ENCODE measurements at regions of chr5 and their contacts with region 1.

Region 1: GRCh38 chr5:107979900-107980299 is 309.2 kb upstream of the EFNA5 start:
- DNase-seq: no peak
- ATAC-seq: peak; percentile 41
- H3K4me3 ChIP-seq: no peak overlapping the region
- H3K4me3 Mint-ChIP-seq: peak overlapping the region in 2 of 10 donors; percentile 1 to 45
- H3K27ac ChIP-seq: no peak overlapping the region
- H3K27ac Mint-ChIP-seq: no peak overlapping the region
- H3K4me1 ChIP-seq: no peaks in the 10 kb centered on the region
- H3K4me1 Mint-ChIP-seq: peaks cover 0 to 33% (median 0%) of the 10 kb centered on the region in 7 donors
- H3K27me3 ChIP-seq: no peaks in the 10 kb centered on the region
- H3K27me3 Mint-ChIP-seq: no peaks in the 10 kb centered on the region

Region 2: DNA sequence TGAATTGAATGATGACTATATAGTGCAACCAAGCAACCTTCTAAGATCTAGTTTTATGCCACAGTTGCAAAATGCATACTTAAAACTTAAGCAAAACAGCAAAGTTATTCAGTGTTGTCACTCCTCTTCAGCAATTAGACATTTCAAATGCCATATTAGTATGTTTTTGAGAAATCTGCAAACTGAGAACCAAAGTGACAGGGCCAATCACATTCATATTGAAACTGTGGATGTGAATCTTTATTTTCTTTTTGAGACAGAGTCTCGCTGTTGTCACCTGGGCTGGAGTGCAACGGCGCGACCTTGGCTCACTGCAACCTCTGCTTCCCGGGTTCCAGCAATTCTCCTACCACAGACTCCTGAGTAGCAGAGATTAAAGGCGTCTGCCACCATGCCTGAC is 59.9 kb before region 1 on chr5:
- CTCF ChIA-PET with region 1: no interaction called
- POLR2A ChIA-PET with region 1: no interaction called
- intact Hi-C with region 1: loop called in 1 of 2 experiments (anchors 2 kb)
- DNase-seq: no peak
- ATAC-seq: no peak
- H3K4me3 ChIP-seq: no peak overlapping the region
- H3K4me3 Mint-ChIP-seq: peak overlapping the region in 1 of 10 donors; percentile 13
- H3K27ac ChIP-seq: no peak overlapping the region
- H3K27ac Mint-ChIP-seq: peak overlapping the region in 1 of 9 donors; percentile 4
- H3K4me1 ChIP-seq: peaks cover 0 to 5% of the 10 kb centered on the region in 2 donors
- H3K4me1 Mint-ChIP-seq: peaks cover 4 to 54% (median 27%) of the 10 kb centered on the region in 7 donors
- H3K27me3 ChIP-seq: no peaks in the 10 kb centered on the region
- H3K27me3 Mint-ChIP-seq: no peaks in the 10 kb centered on the region

Region 3: GRCh38 chr5:108078345-108078744 is 98.4 kb after region 1 on chr5:
- CTCF ChIA-PET with region 1: no interaction called
- POLR2A ChIA-PET with region 1: no interaction called
- intact Hi-C with region 1: no loop called
- DNase-seq: no peak
- ATAC-seq: no peak
- H3K4me3 ChIP-seq: no peak overlapping the region
- H3K4me3 Mint-ChIP-seq: no peak overlapping the region
- H3K27ac ChIP-seq: no peak overlapping the region
- H3K27ac Mint-ChIP-seq: no peak overlapping the region
- H3K4me1 ChIP-seq: no peaks in the 10 kb centered on the region
- H3K4me1 Mint-ChIP-seq: peaks cover 0 to 4% (median 0%) of the 10 kb centered on the region in 7 donors
- H3K27me3 ChIP-seq: no peaks in the 10 kb centered on the region
- H3K27me3 Mint-ChIP-seq: no peaks in the 10 kb centered on the region

Measured in naive thymus-derived CD4-positive, alpha-beta T cell (primary cell).